ENCODE measurements at regions of chr22 and their contacts with region 1.

Region 1: DNA sequence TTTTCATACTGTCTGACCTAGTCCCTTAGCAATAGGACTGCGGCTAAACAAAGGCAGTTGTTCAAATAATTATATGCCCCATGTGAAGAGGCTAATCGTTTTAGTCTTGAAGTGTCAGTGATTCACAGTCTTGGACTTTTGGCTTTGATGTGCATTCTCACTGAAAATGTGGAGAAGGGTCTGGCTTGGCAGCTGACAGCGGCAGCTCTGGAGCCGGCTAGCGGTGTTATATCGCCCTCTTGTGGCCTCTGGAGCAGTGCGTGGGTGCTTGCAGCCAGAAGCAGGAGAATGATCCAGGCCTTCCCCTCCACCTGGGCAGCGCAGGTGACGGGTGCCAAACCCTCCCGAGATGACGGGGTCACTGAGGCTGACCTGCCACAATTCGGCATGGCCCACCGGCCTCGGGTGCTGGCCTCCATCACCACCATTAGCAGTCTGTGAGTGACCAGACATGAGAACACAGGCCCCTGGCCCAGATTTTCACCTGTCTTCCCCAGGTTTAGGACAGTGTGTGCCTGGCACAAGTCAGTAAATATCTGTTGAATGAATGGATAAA is 90.3 kb upstream of the PITPNB start:
- DNase-seq: peak; percentile 78
- ATAC-seq: peak; percentile 83
- H3K4me3 ChIP-seq: no peak overlapping the region
- H3K27ac ChIP-seq: no peak overlapping the region
- H3K4me1 ChIP-seq: peaks cover 25% of the 10 kb centered on the region
- H3K27me3 ChIP-seq: no peaks in the 10 kb centered on the region
- CTCF ChIP-seq: peak; percentile 98
- POLR2A ChIP-seq: peak; percentile 43; the same call in 1 of the 2 replicates
- RAD21 ChIP-seq: peak; percentile 99

Region 2: DNA sequence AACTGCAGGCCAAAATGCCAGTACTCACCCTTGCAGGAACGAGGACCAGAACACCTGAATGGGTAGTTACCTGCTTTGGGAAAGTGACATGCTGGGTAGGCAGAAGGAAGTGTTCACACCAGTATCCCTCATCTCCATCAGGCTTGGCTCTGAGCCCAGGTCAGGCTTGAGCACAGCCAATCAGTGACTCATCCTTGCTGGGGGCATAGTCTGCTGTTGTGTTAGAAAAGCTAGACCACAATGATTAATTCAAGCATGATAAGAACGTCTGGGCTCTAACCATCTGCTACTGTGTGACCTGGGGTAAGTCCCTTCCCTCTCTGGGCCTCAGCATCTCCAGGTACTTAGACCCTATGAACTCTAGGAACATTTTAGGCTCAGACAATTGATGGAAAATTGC is 901.5 kb before region 1 on chr22:
- CTCF ChIA-PET with region 1: no interaction called
- POLR2A ChIA-PET with region 1: no interaction called
- dilution Hi-C with region 1: no loop called
- in situ Hi-C with region 1: no loop called
- intact Hi-C with region 1: loop called (anchors 5 kb)
- DNase-seq: peak; percentile 94
- ATAC-seq: peak; percentile 72
- H3K4me3 ChIP-seq: no peak overlapping the region
- H3K27ac ChIP-seq: no peak overlapping the region
- H3K4me1 ChIP-seq: peaks cover 13% of the 10 kb centered on the region
- H3K27me3 ChIP-seq: peaks cover 8% of the 10 kb centered on the region
- CTCF ChIP-seq: no peak
- POLR2A ChIP-seq: no peak
- RAD21 ChIP-seq: no peak

Region 3: DNA sequence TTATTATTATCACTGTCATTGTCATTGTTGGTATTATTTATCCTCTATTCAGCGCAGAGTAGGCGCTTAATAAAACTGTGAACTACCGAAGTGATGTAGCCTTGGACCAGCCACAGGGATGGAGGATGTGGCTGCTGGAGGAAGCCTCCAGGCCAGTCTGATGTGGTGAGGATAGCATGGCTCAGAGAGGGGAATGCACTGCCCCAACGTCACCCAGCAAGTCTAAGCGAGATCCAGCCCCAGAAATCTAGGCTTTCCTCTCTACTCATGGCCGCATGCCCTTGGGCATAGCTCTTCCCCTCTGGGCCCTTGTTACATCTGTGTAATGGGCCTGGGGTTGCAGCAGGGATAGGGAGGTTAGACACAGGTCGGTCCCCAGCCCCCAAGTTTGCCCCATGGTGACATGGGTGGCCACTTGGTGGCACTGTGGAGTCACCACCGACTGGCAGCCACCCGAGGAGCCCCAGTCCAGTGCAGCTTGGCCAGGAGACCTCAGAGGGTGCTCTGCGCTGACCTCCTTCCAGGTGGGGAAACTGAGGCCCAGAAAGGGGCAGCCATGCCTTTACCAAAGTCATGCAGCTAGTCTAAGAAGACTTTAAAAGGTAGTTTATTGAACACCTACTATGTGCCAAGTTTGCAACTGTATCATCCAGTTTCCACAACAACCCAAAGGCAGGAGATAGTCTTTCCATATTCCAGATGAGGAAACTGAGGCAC is 603.5 kb before region 1 on chr22:
- CTCF ChIA-PET with region 1: no interaction called
- POLR2A ChIA-PET with region 1: no interaction called
- dilution Hi-C with region 1: no loop called
- in situ Hi-C with region 1: loop called (anchors 10 kb)
- intact Hi-C with region 1: loop called (anchors 2 kb)
- DNase-seq: peak; percentile 45
- ATAC-seq: peak; percentile 95
- H3K4me3 ChIP-seq: no peak overlapping the region
- H3K27ac ChIP-seq: no peak overlapping the region
- H3K4me1 ChIP-seq: no peaks in the 10 kb centered on the region
- H3K27me3 ChIP-seq: peaks cover 14% of the 10 kb centered on the region
- CTCF ChIP-seq: peak; percentile 79
- POLR2A ChIP-seq: peak; percentile 28; the same call in 1 of the 2 replicates
- RAD21 ChIP-seq: peak; percentile 93

Region 4: GRCh38 chr22:27420817-27421361 is 588.5 kb before region 1 on chr22:
- CTCF ChIA-PET with region 1: no interaction called
- POLR2A ChIA-PET with region 1: no interaction called
- dilution Hi-C with region 1: no loop called
- in situ Hi-C with region 1: loop called (anchors 10 kb)
- intact Hi-C with region 1: no loop called
- DNase-seq: peak; percentile 95
- ATAC-seq: peak; percentile 76
- H3K4me3 ChIP-seq: no peak overlapping the region
- H3K27ac ChIP-seq: peak overlapping the region; percentile 62; the same call in 1 of the 2 replicates
- H3K4me1 ChIP-seq: peaks cover 18% of the 10 kb centered on the region
- H3K27me3 ChIP-seq: peaks cover 13% of the 10 kb centered on the region
- CTCF ChIP-seq: no peak
- POLR2A ChIP-seq: no peak
- RAD21 ChIP-seq: no peak; the same call in 1 of the 2 replicates

Region 5: DNA sequence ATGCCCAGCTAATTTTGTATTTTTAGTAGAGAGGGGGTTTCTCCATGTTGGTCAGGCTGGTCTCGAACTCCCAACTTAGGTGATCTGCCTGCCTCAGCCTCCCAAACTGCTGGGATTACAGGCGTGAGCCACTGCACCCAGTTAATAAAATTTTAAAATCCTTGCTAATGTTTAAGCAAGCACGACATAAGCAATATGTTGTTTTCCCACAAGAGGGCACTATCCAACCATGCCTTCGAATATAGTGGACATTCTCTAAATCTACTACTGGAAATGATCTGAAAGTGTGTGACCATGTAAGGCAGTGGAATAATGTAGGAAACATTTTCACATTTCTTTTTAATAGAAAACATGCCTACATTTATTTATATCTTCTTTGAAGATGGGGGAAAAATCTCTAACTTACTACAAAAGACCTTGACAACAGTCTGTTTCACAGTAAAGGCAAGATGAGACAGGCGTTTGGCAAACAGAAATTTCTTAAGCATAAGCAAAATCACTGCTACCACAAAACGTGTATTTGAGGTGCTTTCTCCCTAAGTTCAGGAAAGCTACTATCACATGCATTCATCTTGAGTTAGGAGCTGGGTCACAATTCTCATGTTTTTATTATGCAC is 128.5 kb before region 1 on chr22:
- CTCF ChIA-PET with region 1: interaction called, 7 read pairs
- POLR2A ChIA-PET with region 1: no interaction called
- dilution Hi-C with region 1: no loop called
- in situ Hi-C with region 1: loop called (anchors 5 kb)
- intact Hi-C with region 1: loop called (anchors 1 kb)
- DNase-seq: peak; percentile 86
- ATAC-seq: peak; percentile 68
- H3K4me3 ChIP-seq: no peak overlapping the region
- H3K27ac ChIP-seq: peak overlapping the region; percentile 67; the same call in 1 of the 2 replicates
- H3K4me1 ChIP-seq: peaks cover 31% of the 10 kb centered on the region
- H3K27me3 ChIP-seq: no peaks in the 10 kb centered on the region
- CTCF ChIP-seq: peak; percentile 84
- POLR2A ChIP-seq: peak; percentile 46; the same call in 1 of the 2 replicates
- RAD21 ChIP-seq: peak; percentile 90

Region 6: DNA sequence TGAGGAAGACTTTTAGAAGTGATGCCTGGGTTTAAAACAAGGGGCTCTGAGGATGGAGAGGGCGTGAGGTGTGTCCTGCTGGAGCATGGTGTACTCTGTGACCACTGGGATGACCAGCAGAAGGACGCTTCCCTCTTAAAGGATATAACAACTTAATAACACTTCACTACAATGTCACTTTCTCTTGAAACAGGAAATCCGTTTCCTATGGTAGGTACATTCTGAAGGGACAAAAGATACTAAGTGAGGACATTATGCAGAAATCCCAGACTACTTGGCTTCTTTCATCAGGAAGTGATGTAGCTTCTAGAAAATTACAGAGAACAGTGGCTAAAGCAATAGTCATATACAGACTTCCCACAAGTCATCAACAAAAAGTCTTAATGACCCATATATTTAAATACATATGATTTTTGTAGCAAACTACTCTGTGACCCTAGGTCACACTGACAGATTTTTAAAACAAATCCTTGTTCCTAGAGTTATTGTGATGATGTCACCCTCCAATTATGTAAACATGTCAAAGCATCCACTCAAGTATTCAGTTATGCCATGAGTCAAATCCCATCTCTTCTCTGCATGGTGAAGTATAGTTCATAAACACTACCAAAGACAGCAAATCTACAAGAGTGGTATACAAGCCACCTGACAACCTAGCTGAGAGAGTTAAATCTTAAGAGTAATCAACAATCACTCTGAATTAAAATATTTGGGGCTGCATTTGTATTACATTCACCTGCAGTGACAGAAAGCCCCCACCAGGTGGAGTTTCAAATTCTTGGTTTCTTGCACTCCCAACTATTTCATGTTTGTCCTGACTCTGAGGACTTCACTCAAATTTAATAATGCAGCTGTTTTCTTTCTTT is 123.1 kb before region 1 on chr22:
- CTCF ChIA-PET with region 1: interaction called, 7 read pairs
- POLR2A ChIA-PET with region 1: no interaction called
- dilution Hi-C with region 1: no loop called
- in situ Hi-C with region 1: loop called (anchors 5 kb)
- intact Hi-C with region 1: loop called (anchors 1 kb)
- DNase-seq: peak; percentile 98
- ATAC-seq: peak; percentile 79
- H3K4me3 ChIP-seq: no peak overlapping the region
- H3K27ac ChIP-seq: peak overlapping the region; percentile 97
- H3K4me1 ChIP-seq: peaks cover 38% of the 10 kb centered on the region
- H3K27me3 ChIP-seq: no peaks in the 10 kb centered on the region
- CTCF ChIP-seq: peak; percentile 74
- POLR2A ChIP-seq: no peak
- RAD21 ChIP-seq: peak; percentile 60

Measured in IMR-90 (cell line).